Mucosa of descending colon (tissue), 3 donors: ENCODE measurements at regions of chr4 and their contacts with region 1.

Region 1: DNA sequence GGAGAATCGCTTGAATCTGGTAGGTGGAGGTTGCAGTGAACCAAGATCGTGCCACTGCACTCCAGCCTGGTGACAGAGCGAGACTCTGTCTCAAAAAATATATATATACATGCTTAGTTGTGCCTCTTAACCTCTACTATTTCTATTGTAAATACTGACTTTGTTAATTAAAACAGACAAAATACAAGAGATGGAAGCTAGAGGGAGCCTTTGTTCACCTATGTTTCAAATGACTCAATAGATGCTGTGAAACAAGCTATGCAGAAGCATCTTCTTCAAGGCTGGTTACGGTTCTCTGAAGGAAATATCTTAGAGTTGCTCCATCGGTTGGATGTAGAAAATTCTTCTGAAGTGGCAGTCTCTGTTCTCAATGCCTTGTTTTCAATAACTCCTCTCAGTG is 6.2 kb downstream of the NCAPG start:
- DNase-seq: peak in 1 of 3 donors; percentile 12
- ATAC-seq: peak; percentile 69
- H3K4me3 ChIP-seq: no peak overlapping the region
- H3K4me1 ChIP-seq: no peaks in the 10 kb centered on the region
- CTCF ChIP-seq: peak; percentile 25

Region 2: DNA sequence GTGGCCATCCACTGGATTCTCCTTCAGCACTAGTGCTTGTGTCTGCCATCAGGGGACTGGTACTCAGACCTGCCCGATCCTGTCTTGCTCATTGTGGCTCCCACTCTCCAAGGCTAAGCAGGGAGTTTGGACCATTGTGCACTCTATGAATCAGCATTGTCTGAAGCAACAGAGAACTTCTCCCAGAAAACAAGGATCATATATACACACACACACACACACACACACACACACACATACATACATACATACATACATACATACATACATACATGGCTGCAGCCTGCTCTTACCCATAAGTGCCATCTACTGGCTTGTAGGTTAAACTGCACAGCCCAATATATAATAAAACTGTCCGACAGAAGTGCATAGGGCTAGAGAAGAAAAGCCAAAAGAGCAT is 549.9 kb after region 1 on chr4:
- intact Hi-C with region 1: loop called in 1 of 2 experiments (anchors 5 kb)
- DNase-seq: peak in 1 of 3 donors; percentile 23
- ATAC-seq: peak; percentile 82
- H3K4me3 ChIP-seq: no peak overlapping the region
- H3K4me1 ChIP-seq: no peaks in the 10 kb centered on the region
- CTCF ChIP-seq: peak; percentile 30